Cardiac septum (tissue), 1 donor: ENCODE measurements at regions of chr15 and their contacts with region 1.

Region 1: DNA sequence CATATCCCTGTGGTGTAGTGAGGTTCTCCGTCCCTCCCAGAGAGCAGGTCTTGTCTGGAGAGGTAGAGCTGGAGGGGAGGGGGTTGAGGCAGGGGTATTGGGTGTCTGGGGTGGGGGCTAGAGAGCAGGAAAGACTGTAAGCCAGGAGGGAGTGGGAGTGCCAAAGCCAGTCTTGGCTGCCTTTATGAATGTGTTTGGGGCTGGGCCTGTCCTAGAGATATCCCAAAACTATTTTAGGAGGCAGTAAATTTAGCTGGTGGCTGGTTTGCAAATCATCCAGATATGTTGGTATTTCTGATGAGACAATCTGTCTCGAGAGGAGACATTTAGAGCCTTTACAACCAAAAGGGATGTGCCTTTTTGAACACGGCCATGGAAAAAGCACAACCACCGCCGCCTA is 166.6 kb downstream of the TLE3 start:
- DNase-seq: no peak

Region 2: DNA sequence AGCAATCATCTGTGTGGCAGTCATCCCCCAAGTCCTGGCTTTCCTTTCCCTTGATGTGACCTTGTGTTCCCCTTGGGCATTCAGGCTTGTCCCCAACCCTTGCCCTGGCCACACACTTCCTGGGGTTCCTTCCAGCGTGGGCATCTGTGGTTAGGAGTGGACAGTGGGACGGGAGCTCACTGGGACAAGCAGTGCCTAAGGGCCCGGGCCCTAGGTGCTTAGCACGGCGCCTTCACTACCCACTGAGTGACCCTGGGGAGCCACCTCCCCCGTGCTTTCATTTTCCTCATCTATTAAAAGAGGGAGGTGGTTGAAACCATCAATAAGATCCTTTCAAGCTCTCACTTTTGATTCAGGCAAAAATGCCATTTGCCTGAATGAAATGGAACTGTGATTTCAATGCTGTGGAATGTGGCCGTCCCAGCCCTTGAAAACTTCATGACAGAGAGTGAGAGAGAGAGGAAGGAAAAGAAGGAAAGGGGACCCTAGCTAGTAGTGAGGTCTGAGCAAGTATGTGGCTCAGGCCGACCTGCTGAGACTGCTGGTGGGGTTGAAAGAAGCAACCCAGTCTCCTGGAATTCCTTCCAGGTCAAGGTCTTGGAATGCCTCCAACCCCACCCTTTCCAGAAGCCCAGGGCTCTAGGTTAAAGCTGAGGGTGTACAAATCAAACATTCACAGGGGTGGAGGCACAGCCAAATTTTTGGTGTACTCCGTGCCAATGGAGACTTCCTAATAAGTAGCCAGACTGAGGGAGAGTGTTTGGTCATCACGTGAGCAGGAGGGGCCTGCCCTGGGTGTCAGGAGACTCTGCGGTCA is 136.3 kb before region 1 on chr15:
- intact Hi-C with region 1: loop called (anchors 5 kb)
- DNase-seq: no peak

Region 3: DNA sequence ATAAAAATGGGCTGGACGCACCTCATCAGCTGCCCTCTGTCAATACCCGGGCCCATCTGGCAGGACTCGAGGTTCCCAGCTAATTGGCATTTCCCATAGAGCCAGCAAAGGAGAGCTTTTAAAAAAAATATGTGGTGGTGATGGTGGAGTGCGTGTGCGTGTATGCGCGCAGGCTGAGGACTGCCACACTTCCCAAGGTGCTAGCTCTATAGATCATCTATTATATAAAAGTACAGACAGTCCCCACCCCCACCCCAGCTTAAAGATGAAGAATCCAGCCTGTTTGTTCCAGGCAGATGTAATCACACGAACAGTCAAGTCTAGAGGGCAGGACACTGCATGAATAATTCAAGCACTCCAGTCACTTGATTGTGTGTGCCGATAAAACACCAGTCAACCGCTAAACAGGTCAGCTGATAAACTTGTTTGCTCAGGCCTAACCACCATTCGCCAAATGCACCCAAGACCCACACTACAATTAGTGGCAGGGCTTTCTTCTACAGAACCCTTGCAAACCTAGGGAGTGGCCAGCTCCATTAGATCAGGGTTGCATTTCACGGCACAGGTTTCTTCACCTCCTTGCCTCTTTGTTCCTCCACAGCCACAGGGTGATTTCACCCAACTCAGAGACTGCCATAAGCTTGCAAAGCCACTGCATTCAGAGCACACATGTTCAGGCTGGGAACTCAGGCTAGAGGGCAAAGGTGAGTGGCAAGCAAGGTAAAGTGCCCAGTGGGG is 160.7 kb after region 1 on chr15:
- intact Hi-C with region 1: loop called (anchors 5 kb)
- DNase-seq: peak; percentile 27